Dendritic cell treated with granulocyte-macrophage colony-stimulating factor and Interleukin-4, amounts not matched to agents 40 ng/mL and 50 ng/mL, for 4 days (primary cell): ENCODE measurements at regions of chr1 and their contacts with region 1.

Region 1: GRCh38 chr1:192967901-192968300 is 91.3 kb downstream of the UCHL5 start:
- H3K4me3 Mint-ChIP-seq: no peak overlapping the region
- H3K27ac Mint-ChIP-seq: no peak overlapping the region
- H3K4me1 Mint-ChIP-seq: peaks cover 6% of the 10 kb centered on the region
- H3K27me3 Mint-ChIP-seq: peaks cover 1% of the 10 kb centered on the region

Region 2: DNA sequence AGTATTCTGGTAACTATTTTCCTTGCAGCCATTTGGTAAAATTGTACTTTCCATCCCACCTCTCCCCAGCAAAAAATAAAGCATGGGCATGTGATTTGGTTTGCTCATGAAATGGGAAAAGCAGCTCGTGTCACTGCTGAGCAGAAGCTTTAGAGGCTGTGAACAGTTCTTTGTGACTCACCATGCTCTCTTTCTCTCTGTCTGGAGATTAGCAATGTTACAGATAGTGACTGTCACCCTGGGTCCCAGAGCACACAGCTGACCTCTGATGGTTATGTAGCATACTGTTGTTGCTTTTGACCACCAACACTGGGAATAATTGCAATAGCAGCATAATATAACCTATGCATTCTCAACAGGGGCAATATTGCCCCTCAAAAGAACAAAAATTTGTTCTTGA is 88.5 kb before region 1 on chr1:
- intact Hi-C with region 1: no loop called
- H3K4me3 Mint-ChIP-seq: no peak overlapping the region
- H3K27ac Mint-ChIP-seq: no peak overlapping the region
- H3K4me1 Mint-ChIP-seq: peaks cover 50% of the 10 kb centered on the region
- H3K27me3 Mint-ChIP-seq: peaks cover 1% of the 10 kb centered on the region

Region 3: DNA sequence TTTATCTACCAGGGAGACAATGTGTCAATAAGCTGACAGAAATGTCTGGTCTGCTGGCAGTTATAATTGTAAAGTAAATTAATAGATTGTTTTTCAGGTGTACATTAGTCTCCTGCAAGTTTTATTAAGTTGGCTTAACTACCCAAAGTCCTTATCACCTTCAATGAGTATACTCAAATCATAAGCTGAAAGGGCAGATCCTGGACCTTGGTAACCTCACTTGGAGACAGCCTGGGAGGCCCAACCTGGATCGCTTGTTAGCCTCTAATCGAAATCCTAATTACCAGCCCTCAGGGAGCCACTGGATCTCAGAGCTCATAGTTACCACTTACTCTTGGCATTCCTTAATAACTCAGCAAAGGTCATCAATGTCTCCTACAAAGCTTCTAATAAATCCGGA is 41.6 kb after region 1 on chr1:
- intact Hi-C with region 1: loop called (anchors 5 kb)
- H3K4me3 Mint-ChIP-seq: no peak overlapping the region
- H3K27ac Mint-ChIP-seq: no peak overlapping the region
- H3K4me1 Mint-ChIP-seq: peaks cover 12% of the 10 kb centered on the region
- H3K27me3 Mint-ChIP-seq: no peaks in the 10 kb centered on the region

Region 4: GRCh38 chr1:193019442-193020026 is 51.6 kb after region 1 on chr1:
- intact Hi-C with region 1: no loop called
- H3K4me3 Mint-ChIP-seq: no peak overlapping the region
- H3K27ac Mint-ChIP-seq: no peak overlapping the region
- H3K4me1 Mint-ChIP-seq: no peaks in the 10 kb centered on the region
- H3K27me3 Mint-ChIP-seq: no peaks in the 10 kb centered on the region

Region 5: DNA sequence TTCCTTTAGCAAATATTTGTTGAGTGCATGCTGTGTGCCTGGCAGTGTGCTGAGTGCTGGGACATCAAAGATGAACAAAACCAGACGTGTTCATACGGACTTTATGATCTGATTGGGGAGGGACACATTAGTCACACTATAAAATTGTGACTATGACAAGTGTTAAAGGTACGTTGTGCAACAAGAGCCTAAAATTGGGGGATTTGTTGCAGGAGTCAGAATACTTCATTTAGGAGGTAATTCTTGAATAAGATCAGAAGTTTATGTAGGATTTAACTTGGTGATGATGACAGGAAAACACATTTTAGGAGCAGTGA is 188.9 kb after region 1 on chr1:
- intact Hi-C with region 1: no loop called
- H3K4me3 Mint-ChIP-seq: no peak overlapping the region
- H3K27ac Mint-ChIP-seq: no peak overlapping the region
- H3K4me1 Mint-ChIP-seq: peaks cover 5% of the 10 kb centered on the region
- H3K27me3 Mint-ChIP-seq: no peaks in the 10 kb centered on the region